Right ventricle myocardium superior (tissue), 1 donor: ENCODE measurements at regions of chr5 and their contacts with region 1.

Region 1: GRCh38 chr5:172932313-172933017 is 26.8 kb upstream of the RPL26L1 start:
- DNase-seq: peak; percentile 88
- ATAC-seq: peak; percentile 95

Region 2: DNA sequence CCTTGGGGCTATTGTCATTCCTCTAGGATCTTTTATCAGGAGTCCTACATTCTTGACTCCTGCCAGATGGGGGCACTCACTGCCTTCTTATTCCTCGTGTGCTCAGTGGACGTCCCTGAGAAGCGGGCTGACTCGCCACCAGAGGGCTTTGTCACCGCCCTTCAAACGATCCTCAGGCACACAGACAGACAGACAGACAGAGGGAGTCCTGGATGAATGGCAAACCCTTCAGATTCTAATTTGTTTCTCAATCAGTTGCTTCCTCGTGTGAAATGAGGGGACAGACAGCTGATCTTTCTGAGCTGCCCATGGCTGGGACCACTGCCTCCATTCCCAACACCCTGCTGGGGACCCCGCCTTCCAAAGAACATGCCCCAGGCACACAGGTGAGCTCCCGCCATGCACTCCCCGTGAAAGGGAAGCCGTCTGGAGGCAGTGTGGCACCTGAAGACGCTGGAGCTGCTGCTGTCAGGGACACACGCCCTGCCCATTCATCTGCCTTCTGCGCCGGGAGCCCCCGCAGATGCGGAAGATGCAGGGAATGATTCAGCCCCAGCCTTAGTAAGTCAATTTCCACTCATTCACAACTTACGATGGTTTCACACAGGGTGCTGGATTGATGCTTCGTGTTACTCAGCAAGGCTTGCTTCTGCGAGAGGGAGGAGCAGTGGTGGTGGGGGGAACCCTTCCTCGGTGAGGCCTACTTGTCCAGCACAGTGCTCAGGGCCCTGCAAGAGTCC is 453.3 kb before region 1 on chr5:
- intact Hi-C with region 1: loop called (anchors 10 kb)
- DNase-seq: peak; percentile 91
- ATAC-seq: peak; percentile 95

Region 3: GRCh38 chr5:172714491-172715421 is 217.7 kb before region 1 on chr5:
- intact Hi-C with region 1: loop called (anchors 2 kb)
- DNase-seq: peak; percentile 88
- ATAC-seq: peak; percentile 75

Region 4: DNA sequence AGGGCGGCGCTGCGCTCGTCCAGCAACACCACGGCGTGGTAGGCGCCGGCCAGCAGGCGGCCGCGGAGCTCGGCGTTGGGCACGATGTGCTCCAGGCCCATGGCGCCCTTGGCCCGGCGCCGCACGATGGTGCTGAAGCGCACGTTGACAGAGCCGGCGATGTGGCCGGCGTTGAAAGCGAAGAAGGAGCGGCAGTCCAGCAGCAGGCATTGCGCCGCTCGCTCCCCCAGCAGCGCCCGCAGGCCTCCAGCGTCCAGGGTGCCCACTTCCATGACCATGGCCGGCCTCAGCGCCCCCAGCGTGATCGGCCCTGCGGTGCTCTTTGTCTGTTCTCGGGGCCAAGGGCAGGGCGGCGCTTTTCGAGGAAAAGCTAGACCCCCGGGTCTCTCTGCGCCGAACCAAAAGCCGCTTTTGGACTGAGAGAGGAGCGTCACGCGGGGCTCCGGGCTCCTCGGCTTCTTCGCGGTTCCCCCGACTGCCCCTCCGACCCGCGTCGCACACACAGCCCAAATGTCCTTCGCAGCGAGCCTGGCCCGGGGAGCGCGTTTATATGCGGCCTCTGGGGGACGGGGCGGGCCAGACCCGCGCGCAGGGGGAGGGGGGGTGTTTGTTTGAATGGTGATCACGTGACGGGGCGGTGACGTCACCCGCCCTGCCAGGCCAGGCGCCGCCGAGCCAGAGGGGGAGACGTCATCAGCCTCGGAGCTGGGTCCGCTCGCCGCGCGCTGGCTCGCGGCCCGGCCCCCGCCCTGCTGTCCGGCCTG is 161.6 kb before region 1 on chr5 and contains the start of gene DUSP1:
- intact Hi-C with region 1: loop called (anchors 2 kb)
- DNase-seq: peak; percentile 100
- ATAC-seq: peak; percentile 73
- total RNA-seq, gene DUSP1: 122 TPM